ENCODE measurements at regions of chr2 and their contacts with region 1.

Region 1: DNA sequence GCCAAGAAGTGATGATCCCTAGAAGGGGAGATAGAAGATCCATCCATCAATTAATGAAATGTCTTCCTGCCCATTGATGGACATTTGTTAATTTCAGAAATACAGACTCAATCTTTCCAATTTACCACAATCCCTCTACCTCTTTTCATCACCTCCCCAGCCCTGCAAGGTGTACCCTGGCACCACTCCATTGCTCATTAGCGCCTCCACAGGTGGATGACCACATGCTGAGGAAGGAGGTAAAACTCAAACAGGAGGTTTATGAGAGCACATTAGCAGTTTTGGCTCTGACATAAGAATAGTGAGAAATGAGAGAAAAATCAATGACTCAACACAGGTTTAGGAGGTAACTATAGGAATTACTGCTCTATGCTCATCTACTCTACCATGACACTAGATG is 208.0 kb downstream of the C1D start:
- DNase-seq: no peak
- H3K4me3 ChIP-seq: no peak overlapping the region
- H3K27ac ChIP-seq: peak overlapping the region in 1 of 2 experiments; percentile 97; a peak in 2 of 4 replicates
- H3K4me1 ChIP-seq: peaks cover 0 to 18% of the 10 kb centered on the region in 2 experiments; a peak in 2 of 4 replicates
- H3K27me3 ChIP-seq: no peaks in the 10 kb centered on the region
- CTCF ChIP-seq: peak; percentile 19; the same call in 1 of the 2 replicates
- EP300 ChIP-seq: no peak
- RAD21 ChIP-seq: no peak

Region 2: DNA sequence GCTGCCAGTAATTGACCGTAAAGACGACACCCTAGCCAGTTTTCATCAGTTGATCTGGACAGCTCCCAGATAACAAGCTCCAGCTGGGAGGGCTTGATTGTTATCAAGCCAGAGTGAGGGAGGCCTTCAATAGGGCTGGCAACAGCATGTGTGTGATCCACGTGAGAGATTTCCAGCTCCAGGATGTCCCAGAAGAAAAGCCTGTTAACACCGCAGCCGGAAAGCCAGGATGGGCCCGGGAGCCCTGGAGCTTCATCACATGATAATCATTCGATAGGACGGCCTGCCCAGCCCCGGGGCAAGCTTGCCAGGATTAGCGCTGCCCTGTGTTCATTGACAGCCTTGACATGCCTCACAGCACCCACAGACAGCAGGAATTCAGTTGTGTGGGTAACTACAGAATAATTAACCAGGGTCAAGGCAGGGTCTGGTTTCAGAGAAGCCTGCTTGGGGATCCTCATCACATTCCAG is 25.5 kb after region 1 on chr2:
- CTCF ChIA-PET with region 1: interaction called, 14 read pairs
- POLR2A ChIA-PET with region 1: interaction called, 7 read pairs
- DNase-seq: peak; percentile 60
- H3K4me3 ChIP-seq: no peak overlapping the region
- H3K27ac ChIP-seq: peak overlapping the region; percentile 94 to 96
- H3K4me1 ChIP-seq: peaks cover 19 to 35% of the 10 kb centered on the region in 2 experiments
- H3K27me3 ChIP-seq: no peaks in the 10 kb centered on the region
- CTCF ChIP-seq: no peak
- EP300 ChIP-seq: peak; percentile 81 to 97; a peak in 3 of 4 replicates
- RAD21 ChIP-seq: no peak

Region 3: DNA sequence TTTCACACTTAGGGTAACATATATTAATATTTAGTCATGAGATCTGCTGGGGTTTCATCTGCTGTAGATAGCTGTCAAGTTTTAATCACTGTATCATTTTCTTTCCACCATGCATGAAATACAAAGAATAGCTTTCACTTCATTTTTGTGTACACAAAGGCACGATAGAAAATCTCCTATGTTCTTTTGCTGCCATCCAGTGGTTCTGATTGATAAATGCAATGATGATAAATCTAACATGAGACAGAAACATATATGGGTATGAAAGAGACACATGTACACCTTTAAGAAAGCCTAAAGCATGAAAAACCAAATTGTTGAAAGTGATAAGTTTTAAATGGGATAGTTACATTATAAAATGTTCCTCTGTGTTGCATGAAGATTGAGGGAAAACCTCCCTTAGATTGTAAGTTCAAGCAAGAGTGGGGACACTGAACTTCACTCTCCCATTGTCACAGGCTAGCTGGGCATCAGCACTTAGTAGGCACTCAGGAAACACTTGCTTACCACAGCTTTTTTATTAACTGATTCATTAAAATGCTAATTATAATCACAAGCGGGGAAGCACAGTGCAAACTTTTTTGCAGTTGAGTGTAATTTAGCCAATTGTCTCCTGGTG is 176.9 kb after region 1 on chr2:
- CTCF ChIA-PET with region 1: interaction called, 150 read pairs
- POLR2A ChIA-PET with region 1: interaction called, 3 read pairs
- DNase-seq: peak; percentile 48
- H3K4me3 ChIP-seq: no peak overlapping the region
- H3K27ac ChIP-seq: peak overlapping the region; percentile 50 to 80
- H3K4me1 ChIP-seq: peaks cover 4 to 23% of the 10 kb centered on the region in 2 experiments
- H3K27me3 ChIP-seq: no peaks in the 10 kb centered on the region
- CTCF ChIP-seq: peak; percentile 77
- EP300 ChIP-seq: no peak
- RAD21 ChIP-seq: peak; percentile 97